ENCODE measurements at regions of chr17 and their contacts with region 1.

Region 1: GRCh38 chr17:74305865-74306654 is 20.0 kb upstream of the KIF19 start:
- DNase-seq: peak; percentile 47 to 72 (median 65)
- H3K4me3 ChIP-seq: no peak overlapping the region
- H3K27ac ChIP-seq: no peak overlapping the region
- H3K4me1 ChIP-seq: peaks cover 0 to 35% (median 19%) of the 10 kb centered on the region in 4 experiments
- H3K27me3 ChIP-seq: no peaks in the 10 kb centered on the region

Region 2: DNA sequence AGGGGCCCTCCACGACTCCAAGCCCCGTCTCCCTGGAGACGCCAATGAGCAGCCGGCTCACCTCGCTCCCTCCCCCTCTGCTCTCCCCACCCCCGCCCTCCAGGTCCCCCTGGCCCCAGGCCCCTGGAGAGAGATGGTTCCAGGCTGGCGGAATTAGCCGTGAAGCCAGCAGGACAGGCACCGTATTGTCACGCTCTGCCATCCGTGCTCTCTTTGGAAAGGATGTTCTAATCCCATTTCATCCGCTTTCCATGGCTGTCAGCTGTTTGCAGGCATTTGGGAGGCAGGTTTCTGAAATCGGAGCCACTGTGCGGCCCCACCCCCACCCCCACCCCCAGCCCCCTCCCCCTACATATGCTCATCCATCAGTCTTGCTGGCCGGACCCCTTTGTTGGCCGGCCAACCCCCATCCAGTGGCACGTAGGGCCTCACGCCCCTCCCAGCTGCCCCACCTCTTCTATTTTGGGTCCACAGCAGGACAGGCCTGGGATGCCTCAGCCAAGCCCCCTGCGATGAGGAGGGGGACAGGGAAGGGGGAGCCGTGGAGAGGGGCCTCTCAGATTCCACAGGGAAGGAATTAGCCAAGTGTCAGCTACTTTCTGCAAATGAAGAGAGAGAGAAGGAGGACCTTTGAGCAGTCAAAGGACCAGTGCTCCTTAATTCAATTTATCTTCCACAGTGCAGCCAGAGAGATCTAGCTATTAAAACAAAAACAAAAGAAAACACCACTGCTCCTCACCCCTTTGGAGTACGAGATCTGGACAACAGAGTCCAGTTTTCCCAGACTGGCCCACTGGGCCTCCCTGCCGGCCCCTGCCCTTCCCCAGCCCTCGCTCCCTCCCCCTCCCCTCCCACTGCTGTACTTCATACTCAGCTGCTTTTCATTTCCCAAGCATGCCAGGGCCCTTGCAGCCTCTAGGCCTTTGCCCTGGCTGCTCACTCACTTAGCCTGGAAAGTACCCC is 692.5 kb before region 1 on chr17:
- CTCF ChIA-PET with region 1: no interaction called
- POLR2A ChIA-PET with region 1: no interaction called
- DNase-seq: no peak
- H3K4me3 ChIP-seq: no peak overlapping the region
- H3K27ac ChIP-seq: no peak overlapping the region
- H3K4me1 ChIP-seq: peaks cover 0 to 23% (median 7%) of the 10 kb centered on the region in 4 experiments
- H3K27me3 ChIP-seq: no peaks in the 10 kb centered on the region

Region 3: GRCh38 chr17:74280093-74280513 is 26.0 kb before region 1 on chr17:
- CTCF ChIA-PET with region 1: no interaction called
- POLR2A ChIA-PET with region 1: no interaction called
- DNase-seq: no peak
- H3K4me3 ChIP-seq: no peak overlapping the region
- H3K27ac ChIP-seq: no peak overlapping the region
- H3K4me1 ChIP-seq: peaks cover 5 to 21% (median 20%) of the 10 kb centered on the region in 4 experiments
- H3K27me3 ChIP-seq: peaks cover 0 to 3% (median 0%) of the 10 kb centered on the region in 5 experiments

Region 4: DNA sequence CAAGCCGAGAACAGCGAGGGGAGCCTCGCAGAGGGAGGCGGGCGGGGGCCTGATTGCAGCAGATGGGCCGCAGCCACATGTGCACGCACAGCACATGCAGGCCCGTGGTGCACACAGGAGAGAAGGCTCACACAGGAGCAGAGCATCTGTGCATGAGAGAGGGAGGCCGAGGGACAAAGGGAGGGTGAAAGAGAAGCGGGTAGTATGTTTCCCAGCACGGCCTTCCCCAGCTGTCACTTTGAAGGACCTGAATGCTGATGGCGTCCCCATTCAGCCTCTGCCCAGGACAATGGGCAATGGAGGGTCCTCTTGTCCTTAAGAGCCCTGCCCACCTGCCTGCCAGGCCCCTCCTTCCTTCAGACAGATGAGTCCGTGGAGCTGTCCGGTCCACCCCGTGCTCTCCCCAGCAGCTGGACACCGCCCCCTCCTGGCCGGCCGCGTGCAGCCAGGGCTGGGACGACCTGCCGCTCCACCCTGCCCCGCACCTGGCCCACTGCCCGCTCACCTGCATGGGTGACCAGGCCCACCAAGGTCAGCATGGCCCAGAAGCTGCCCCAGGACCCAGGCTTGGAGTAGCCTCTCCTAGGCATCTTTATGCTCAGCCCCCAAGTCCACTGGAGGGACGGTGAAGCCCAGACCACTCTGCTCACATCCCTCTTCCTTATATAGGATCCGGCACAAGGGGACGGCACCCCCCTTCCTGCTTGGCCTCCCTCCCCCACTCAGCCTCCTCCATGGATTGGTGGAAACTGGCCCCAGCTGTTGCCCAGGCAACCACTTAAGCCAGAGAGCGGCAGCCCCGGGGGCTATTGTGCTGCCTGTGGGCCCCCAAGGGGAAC is 55.4 kb after region 1 on chr17 and contains the start of gene BTBD17:
- CTCF ChIA-PET with region 1: interaction called, 185 read pairs
- POLR2A ChIA-PET with region 1: no interaction called
- DNase-seq: peak in 2 of 3 donors; percentile 31 to 39
- H3K4me3 ChIP-seq: no peak within 1 kb of the TSS
- H3K27ac ChIP-seq: no peak within 1 kb of the TSS
- H3K4me1 ChIP-seq: peaks cover 0 to 29% (median 23%) of the 10 kb centered on the region in 4 experiments
- H3K27me3 ChIP-seq: peaks cover 0 to 38% (median 15%) of the 10 kb centered on the region in 5 experiments

Measured in common myeloid progenitor, CD34-positive (primary cell).